ENCODE measurements at regions of chr1 and their contacts with region 1.

Region 1: DNA sequence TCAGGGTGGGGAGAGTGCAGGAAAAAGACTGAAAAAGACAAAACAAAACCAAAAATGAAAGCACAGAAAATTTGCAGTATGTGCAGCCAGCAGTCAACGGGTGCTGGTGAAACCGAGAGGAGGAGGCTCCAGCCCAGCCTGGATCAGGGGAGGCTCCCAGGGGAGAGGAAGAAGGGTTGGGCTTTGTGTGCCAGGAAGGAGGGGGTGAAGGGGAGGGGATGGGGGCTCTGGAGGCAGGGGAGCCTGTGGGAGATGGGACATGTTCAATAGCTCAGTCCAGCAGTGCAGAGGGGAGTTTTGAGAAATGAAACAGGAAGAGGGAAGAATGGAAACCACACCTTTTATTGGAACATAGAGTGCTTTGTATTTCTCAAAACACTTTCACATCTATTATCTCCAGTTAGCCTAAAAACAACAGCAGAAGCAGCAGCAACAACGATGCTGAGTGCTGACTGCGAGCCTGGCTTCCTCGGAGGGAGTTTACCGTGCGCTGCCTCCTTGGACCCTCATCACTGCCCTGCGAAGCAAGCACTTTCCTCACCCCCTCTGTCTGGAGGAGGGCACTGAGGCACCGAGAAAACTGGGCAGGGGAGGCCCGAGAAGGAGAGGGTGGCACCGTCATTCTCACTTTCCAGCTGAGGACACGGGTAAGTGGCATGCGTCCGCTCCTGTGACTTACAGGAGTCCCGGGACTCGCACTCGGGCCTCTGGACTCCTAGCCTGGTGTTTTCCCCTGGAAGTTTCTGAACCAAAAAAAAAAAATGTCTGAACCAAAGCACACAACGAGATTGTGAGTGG is 62.9 kb downstream of the MDM4 start:
- DNase-seq: no peak
- H3K4me3 ChIP-seq: peak overlapping the region; percentile 32 to 52 (median 39)
- H3K27ac ChIP-seq: peak overlapping the region in 3 of 4 donors; percentile 1 to 55 (median 40)
- H3K4me1 ChIP-seq: peaks cover 5 to 25% (median 17%) of the 10 kb centered on the region in 4 donors
- H3K27me3 ChIP-seq: no peaks in the 10 kb centered on the region
- CTCF ChIP-seq: no peak
- EP300 ChIP-seq: no peak
- POLR2A ChIP-seq: no peak

Region 2: DNA sequence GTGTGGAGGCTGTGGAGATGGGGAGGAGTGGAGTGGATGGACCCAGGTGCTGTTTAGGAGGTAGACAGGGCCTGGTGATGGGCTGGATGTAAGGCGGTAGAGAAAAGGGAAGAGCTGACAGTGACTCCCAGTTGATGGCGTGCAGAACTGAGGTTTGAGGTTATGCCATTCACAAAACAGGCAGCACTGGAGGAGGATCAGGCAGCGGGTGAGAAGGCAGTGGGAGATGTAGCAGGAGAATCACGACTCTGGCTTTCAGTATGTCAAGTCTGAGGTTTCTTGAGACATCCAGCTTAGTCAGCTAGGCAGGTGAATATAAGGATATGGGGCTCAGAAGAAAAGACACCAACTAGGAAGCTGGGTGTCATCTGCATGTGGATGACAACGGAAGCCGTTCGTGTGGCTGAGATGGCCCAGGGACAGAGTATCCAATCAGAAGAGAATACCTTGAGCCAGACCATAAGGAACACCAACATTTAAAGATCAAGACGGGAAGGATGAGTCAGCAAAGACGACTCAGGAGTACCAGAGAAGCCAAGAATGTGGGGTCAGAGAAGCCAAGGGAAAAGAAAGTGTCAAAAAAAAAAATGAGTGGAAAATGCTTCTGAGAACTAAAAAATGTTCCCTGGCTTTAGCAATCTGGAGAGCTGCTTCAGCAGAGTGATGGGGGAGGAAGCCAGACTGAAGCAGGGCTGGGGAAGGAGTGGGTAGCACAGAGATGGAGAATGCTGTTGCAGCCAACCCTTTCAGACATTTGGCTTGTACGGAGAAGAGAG is 91.3 kb after region 1 on chr1:
- intact Hi-C with region 1: loop called (anchors 10 kb)
- DNase-seq: no peak
- H3K4me3 ChIP-seq: no peak overlapping the region
- H3K27ac ChIP-seq: peak overlapping the region; percentile 42 to 67 (median 60)
- H3K4me1 ChIP-seq: peaks cover 3 to 49% (median 41%) of the 10 kb centered on the region in 4 donors
- H3K27me3 ChIP-seq: no peaks in the 10 kb centered on the region
- CTCF ChIP-seq: no peak
- EP300 ChIP-seq: no peak
- POLR2A ChIP-seq: no peak